Activated CD4-positive, alpha-beta T cell treated with anti-CD3 and anti-CD28 coated beads for 36 hours (primary cell): ENCODE measurements at regions of chr20 and their contacts with region 1.

Region 1: DNA sequence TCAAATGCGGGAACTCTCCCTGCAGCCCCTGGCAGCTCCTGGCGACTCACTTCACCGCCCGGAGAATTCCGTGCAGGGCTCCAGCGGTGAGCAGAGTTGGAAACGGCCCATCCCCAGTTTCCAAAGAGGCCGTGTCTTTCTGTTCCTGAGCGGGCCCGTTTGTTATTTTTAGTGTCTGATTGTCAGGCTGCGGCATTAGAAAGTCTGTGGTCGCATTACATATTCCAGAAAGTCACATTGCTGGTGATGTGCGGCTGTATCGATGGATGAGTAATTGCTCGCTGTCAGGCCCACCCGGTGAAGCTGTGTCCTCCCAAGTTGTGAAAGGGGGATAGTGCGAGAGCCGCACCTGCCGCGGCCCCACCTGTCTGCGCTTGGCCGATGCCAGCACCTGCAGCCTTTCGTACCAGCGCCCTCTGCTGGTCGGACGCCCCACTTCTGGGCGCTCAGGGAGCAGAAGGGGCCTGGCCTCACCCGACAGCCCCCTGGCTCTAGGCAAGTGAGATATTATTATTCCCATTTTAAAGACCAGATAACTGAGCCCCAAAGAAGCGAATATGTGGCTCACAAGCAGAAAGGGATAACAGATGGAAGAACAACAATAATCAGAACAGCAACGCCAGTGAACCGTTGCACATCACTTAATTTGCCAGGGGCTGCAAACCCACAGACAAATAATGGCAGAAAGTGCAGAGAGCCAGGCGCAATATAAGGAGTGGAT is 244.9 kb downstream of the TSHZ2 start:
- DNase-seq: peak; percentile 89
- ATAC-seq: peak; percentile 55
- H3K4me3 Mint-ChIP-seq: peak overlapping the region; percentile 36
- H3K27ac Mint-ChIP-seq: peak overlapping the region; percentile 84
- H3K4me1 Mint-ChIP-seq: peaks cover 54% of the 10 kb centered on the region
- H3K27me3 Mint-ChIP-seq: no peaks in the 10 kb centered on the region

Region 2: GRCh38 chr20:52242237-52243230 is 974.5 kb before region 1 on chr20:
- CTCF ChIA-PET with region 1: no interaction called
- POLR2A ChIA-PET with region 1: no interaction called
- intact Hi-C with region 1: loop called (anchors 1 to 5 kb)
- DNase-seq: no peak
- ATAC-seq: no peak
- H3K4me3 Mint-ChIP-seq: no peak overlapping the region
- H3K27ac Mint-ChIP-seq: no peak overlapping the region
- H3K4me1 Mint-ChIP-seq: no peaks in the 10 kb centered on the region
- H3K27me3 Mint-ChIP-seq: peaks cover 4% of the 10 kb centered on the region

Region 3: GRCh38 chr20:52410182-52410647 is 806.8 kb before region 1 on chr20:
- CTCF ChIA-PET with region 1: interaction called, 3 read pairs
- POLR2A ChIA-PET with region 1: no interaction called
- intact Hi-C with region 1: loop called in 1 of 2 experiments (anchors 10 kb)
- DNase-seq: peak; percentile 61
- ATAC-seq: peak; percentile 85
- H3K4me3 Mint-ChIP-seq: peak overlapping the region; percentile 53
- H3K27ac Mint-ChIP-seq: peak overlapping the region; percentile 84
- H3K4me1 Mint-ChIP-seq: peaks cover 66% of the 10 kb centered on the region
- H3K27me3 Mint-ChIP-seq: no peaks in the 10 kb centered on the region

Region 4: DNA sequence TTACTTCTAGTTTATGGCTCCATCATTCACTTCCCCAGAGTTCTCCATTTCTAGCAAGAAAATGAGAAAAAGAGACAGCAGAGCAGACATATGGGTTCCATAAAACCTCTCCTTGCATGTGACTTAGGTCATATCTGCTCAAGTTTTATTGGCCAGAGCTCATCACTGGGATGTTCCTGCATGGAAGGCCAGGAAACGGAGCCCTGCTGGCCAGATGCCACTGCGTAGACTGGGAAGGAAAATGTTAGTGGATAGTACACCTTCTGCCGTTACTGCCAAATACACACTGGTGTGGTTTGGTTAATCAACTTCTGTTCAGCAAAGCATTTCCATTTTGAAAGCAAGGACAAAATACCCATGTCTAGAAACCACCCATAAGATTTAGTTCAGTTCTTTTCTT is 465.4 kb before region 1 on chr20:
- CTCF ChIA-PET with region 1: no interaction called
- POLR2A ChIA-PET with region 1: no interaction called
- intact Hi-C with region 1: loop called in 1 of 2 experiments (anchors 10 kb)
- DNase-seq: no peak
- ATAC-seq: no peak
- H3K4me3 Mint-ChIP-seq: no peak overlapping the region
- H3K27ac Mint-ChIP-seq: no peak overlapping the region
- H3K4me1 Mint-ChIP-seq: no peaks in the 10 kb centered on the region
- H3K27me3 Mint-ChIP-seq: peaks cover 2% of the 10 kb centered on the region

Region 5: GRCh38 chr20:53070706-53071392 is 146.2 kb before region 1 on chr20:
- CTCF ChIA-PET with region 1: interaction called, 3 read pairs
- POLR2A ChIA-PET with region 1: no interaction called
- intact Hi-C with region 1: loop called (anchors 2 to 5 kb)
- DNase-seq: peak; percentile 64
- ATAC-seq: peak; percentile 77
- H3K4me3 Mint-ChIP-seq: peak overlapping the region; percentile 24
- H3K27ac Mint-ChIP-seq: peak overlapping the region; percentile 93
- H3K4me1 Mint-ChIP-seq: peaks cover 54% of the 10 kb centered on the region
- H3K27me3 Mint-ChIP-seq: peaks cover 3% of the 10 kb centered on the region

Region 6: DNA sequence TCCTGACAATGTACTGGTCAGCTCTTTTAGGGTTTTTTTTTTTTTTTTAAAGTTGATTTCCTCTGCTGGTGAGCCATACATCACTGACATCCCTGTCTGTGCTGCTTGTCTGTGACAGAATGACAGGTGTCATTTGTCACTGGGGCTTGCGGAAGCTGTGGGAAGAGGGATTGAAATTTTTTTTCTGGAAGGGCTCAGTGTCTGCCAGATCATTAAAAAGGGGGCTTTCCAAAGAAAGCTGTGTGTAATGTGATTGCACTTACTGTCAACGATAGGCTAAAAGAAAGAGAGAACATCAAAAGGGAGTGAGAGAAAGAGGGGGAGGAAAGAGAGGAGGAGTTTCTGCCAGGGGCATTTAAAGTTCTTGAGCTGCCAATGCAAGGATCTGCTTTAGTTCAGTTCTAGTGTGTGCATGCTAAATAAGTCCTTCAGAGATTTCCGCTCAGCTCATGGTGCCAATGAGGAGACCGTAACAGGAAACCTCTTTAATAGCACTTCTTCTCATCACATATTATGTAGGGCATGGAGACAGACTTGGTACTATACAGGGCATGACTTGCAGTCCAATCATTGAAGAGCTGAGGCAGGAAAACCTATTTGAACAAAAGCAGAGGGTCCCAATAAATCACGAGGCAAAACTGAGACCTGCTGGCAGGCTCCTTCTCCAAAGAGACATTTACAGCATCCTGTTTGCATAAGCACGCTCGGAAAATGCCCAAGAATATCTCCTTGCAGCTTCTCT is 67.7 kb before region 1 on chr20:
- CTCF ChIA-PET with region 1: interaction called, 6 read pairs
- POLR2A ChIA-PET with region 1: no interaction called
- intact Hi-C with region 1: loop called (anchors 5 kb)
- DNase-seq: no peak
- ATAC-seq: no peak
- H3K4me3 Mint-ChIP-seq: no peak overlapping the region
- H3K27ac Mint-ChIP-seq: peak overlapping the region; percentile 76
- H3K4me1 Mint-ChIP-seq: peaks cover 66% of the 10 kb centered on the region
- H3K27me3 Mint-ChIP-seq: peaks cover 3% of the 10 kb centered on the region

Region 7: DNA sequence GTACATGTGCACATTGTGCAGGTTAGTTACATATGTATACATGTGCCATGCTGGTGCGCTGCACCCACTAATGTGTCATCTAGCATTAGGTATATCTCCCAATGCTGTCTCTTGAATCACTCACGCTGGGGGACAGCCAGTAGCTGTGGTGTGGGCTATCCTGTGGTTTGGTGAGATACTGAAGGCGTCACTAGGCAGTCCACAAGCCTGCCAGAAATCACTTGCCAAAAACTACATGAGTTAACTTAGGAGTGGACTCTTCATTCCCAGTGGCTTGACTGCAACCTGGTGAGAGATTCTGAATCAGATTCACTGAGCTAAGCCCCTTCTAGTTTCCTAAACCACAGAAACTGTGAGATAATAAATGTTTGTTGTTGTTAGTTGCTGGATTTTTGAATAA is 53.5 kb before region 1 on chr20:
- CTCF ChIA-PET with region 1: no interaction called
- POLR2A ChIA-PET with region 1: no interaction called
- intact Hi-C with region 1: no loop called
- DNase-seq: peak; percentile 53
- ATAC-seq: peak; percentile 73
- H3K4me3 Mint-ChIP-seq: no peak overlapping the region
- H3K27ac Mint-ChIP-seq: no peak overlapping the region
- H3K4me1 Mint-ChIP-seq: peaks cover 22% of the 10 kb centered on the region
- H3K27me3 Mint-ChIP-seq: no peaks in the 10 kb centered on the region

Region 8: DNA sequence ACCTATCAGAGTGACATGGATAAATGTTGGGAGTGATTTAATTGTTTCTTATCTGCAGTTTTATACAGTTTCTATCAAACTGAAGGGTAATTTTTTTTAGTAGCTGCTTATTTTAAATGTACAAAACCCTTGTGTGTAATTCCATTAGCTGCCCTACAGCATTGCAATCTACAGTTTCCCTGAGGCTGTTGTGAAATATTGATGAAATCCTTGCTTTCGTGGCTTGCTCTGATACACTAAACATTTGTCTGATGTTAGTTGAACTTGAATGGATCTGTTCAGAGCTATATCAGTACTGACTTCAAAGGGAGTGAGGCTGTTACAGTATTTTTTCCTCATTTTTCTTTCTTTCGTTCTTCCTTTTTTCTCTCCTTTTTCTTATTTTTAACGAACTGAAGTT is 10.5 kb after region 1 on chr20:
- CTCF ChIA-PET with region 1: no interaction called
- POLR2A ChIA-PET with region 1: no interaction called
- intact Hi-C with region 1: no loop called
- DNase-seq: no peak
- ATAC-seq: no peak
- H3K4me3 Mint-ChIP-seq: no peak overlapping the region
- H3K27ac Mint-ChIP-seq: no peak overlapping the region
- H3K4me1 Mint-ChIP-seq: peaks cover 18% of the 10 kb centered on the region
- H3K27me3 Mint-ChIP-seq: peaks cover 4% of the 10 kb centered on the region